Activated CD4-positive, alpha-beta T cell treated with anti-CD3 and anti-CD28 coated beads for 36 hours (primary cell): ENCODE measurements at regions of chr18 and their contacts with region 1.

Region 1: GRCh38 chr18:3593904-3594661 is 144.1 kb downstream of the TGIF1 start:
- DNase-seq: peak; percentile 92
- ATAC-seq: peak; percentile 81
- H3K4me3 Mint-ChIP-seq: peak overlapping the region; percentile 92
- H3K27ac Mint-ChIP-seq: peak overlapping the region; percentile 99
- H3K4me1 Mint-ChIP-seq: peaks cover 58% of the 10 kb centered on the region
- H3K27me3 Mint-ChIP-seq: no peaks in the 10 kb centered on the region

Region 2: DNA sequence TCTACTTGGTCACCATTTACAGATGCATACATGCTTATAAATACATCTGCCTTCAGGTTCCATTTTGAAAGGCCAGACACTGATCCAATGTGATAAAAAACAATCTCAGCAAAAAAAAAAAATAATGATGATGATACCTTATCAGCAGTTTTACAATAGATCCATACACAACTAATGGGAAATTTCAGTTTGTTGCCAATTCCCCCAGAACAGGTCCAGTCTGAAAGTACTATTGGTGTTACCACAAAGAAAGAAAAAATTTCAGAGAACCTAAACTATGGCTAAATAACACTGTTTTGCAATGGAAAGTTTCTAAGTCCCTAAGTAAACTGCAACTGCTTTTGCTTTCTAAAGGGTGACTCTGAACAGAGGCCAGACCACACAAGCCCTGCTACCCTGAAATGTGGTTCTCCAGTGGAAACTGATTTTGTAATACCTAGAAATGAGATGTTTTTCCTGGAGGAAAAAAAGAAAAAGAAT is 635.2 kb before region 1 on chr18:
- CTCF ChIA-PET with region 1: no interaction called
- POLR2A ChIA-PET with region 1: no interaction called
- intact Hi-C with region 1: loop called in 1 of 2 experiments (anchors 2 kb)
- DNase-seq: peak; percentile 63
- ATAC-seq: no peak
- H3K4me3 Mint-ChIP-seq: peak overlapping the region; percentile 71
- H3K27ac Mint-ChIP-seq: peak overlapping the region; percentile 100
- H3K4me1 Mint-ChIP-seq: peaks cover 90% of the 10 kb centered on the region
- H3K27me3 Mint-ChIP-seq: no peaks in the 10 kb centered on the region

Region 3: GRCh38 chr18:3261371-3262246 is 332.5 kb before region 1 on chr18 and contains the start of gene MYL12B:
- CTCF ChIA-PET with region 1: interaction called, 5 read pairs
- POLR2A ChIA-PET with region 1: interaction called, 5 read pairs
- intact Hi-C with region 1: loop called (anchors 1 to 2 kb)
- DNase-seq: peak; percentile 88
- ATAC-seq: peak; percentile 77
- H3K4me3 Mint-ChIP-seq: peak within 1 kb of the TSS; percentile 88
- H3K27ac Mint-ChIP-seq: peak within 1 kb of the TSS; percentile 96
- H3K4me1 Mint-ChIP-seq: peaks cover 59% of the 10 kb centered on the region
- H3K27me3 Mint-ChIP-seq: no peaks in the 10 kb centered on the region
- total RNA-seq, gene MYL12B: 282 to 301 TPM

Region 4: DNA sequence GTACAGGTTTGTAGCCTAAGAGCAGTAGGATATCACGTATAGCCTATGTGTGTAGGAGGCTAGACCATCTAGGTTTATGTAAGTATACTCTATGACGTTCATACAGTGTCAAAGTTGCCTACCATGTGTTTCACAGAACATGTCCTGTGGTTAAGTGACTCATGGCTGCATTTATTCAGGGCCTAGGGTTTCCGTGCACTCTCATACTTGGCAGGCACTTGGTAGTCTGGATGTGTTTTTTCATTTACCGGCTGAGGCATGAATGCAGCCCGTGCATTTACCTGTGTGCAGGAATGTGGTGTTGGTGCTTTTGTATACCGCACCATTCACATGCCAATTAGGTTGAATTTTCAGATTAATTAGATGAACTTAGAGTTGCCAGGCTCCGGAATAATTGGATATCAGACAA is 288.7 kb before region 1 on chr18:
- CTCF ChIA-PET with region 1: interaction called, 4 read pairs
- POLR2A ChIA-PET with region 1: no interaction called
- intact Hi-C with region 1: loop called in 1 of 2 experiments (anchors 2 kb)
- DNase-seq: peak; percentile 72
- ATAC-seq: peak; percentile 98
- H3K4me3 Mint-ChIP-seq: peak overlapping the region; percentile 20
- H3K27ac Mint-ChIP-seq: peak overlapping the region; percentile 89
- H3K4me1 Mint-ChIP-seq: peaks cover 20% of the 10 kb centered on the region
- H3K27me3 Mint-ChIP-seq: peaks cover 16% of the 10 kb centered on the region

Region 5: DNA sequence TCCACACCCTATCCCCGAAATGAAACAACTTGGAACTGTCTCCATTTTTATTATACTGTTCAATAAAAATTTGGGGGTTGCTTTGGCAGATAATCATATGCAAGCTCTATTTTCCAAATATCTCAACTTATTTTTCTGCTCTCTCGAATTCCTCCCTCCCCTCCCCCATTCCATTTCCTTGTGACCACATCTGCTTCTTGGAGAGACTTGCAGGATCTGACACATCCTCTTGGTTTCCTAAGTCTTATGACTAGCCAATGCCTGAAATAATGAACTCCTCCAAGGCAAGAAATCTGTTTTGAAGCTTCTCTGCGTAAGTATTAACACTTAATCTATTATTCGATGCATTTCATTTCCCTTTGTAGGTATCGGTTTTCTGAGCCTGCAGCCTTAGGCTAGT is 128.0 kb before region 1 on chr18:
- CTCF ChIA-PET with region 1: interaction called, 12 read pairs
- POLR2A ChIA-PET with region 1: interaction called, 5 read pairs
- intact Hi-C with region 1: no loop called
- DNase-seq: no peak
- ATAC-seq: no peak
- H3K4me3 Mint-ChIP-seq: no peak overlapping the region
- H3K27ac Mint-ChIP-seq: no peak overlapping the region
- H3K4me1 Mint-ChIP-seq: peaks cover 26% of the 10 kb centered on the region
- H3K27me3 Mint-ChIP-seq: no peaks in the 10 kb centered on the region

Region 6: GRCh38 chr18:3604498-3605408 is 10.7 kb after region 1 on chr18:
- CTCF ChIA-PET with region 1: interaction called, 34 read pairs
- POLR2A ChIA-PET with region 1: interaction called, 9 read pairs
- intact Hi-C with region 1: loop called (anchors 1 kb)
- DNase-seq: peak; percentile 59
- ATAC-seq: peak; percentile 69
- H3K4me3 Mint-ChIP-seq: no peak overlapping the region
- H3K27ac Mint-ChIP-seq: no peak overlapping the region
- H3K4me1 Mint-ChIP-seq: peaks cover 11% of the 10 kb centered on the region
- H3K27me3 Mint-ChIP-seq: no peaks in the 10 kb centered on the region

Region 7: DNA sequence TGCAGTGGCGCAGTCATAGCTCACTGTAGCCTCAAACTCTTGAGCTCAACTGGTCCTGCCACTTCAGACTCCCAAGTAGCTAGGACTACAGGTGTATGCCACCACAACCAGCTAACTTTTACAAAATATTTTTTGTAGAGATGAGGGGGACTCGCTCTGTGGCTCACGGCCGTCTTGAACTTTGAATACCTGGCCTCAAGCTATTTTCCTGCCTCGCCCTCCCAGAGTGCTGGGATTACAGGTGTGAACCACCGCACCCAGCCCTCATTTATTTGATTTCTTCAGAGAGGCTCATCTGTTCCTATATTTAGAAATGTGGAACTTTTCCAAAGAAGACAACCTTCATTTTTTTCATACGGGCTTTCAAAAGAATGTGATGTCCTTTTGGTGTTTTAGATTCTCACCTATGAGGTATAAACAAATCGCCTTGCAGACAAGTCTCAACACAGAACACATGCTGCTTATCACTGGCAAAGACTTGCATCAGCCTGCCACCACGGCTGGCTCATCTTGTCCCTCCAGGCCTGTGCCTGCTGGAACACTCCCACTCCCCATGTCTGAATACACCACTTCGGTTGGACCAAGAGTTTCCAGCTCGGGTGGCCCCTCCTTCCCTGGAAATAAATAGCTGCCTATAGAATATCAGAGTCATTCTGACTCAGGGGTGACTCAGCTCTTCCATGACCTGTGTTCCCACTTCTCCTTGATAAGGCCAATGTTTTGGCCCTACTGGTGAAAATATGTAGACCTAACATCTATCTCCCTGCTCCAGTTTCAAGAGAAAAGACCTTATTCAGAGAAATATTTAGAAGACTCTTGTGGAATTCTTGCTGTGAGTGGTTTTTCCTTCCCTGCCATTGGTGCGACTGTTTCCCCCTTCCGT is 58.5 kb after region 1 on chr18:
- CTCF ChIA-PET with region 1: interaction called, 4 read pairs
- POLR2A ChIA-PET with region 1: interaction called, 3 read pairs
- intact Hi-C with region 1: loop called in 1 of 2 experiments (anchors 1 kb)
- DNase-seq: peak; percentile 90
- ATAC-seq: peak; percentile 97
- H3K4me3 Mint-ChIP-seq: peak overlapping the region; percentile 27
- H3K27ac Mint-ChIP-seq: peak overlapping the region; percentile 91
- H3K4me1 Mint-ChIP-seq: peaks cover 46% of the 10 kb centered on the region
- H3K27me3 Mint-ChIP-seq: no peaks in the 10 kb centered on the region